ENCODE measurements at regions of chr4 and their contacts with region 1.

Region 1: DNA sequence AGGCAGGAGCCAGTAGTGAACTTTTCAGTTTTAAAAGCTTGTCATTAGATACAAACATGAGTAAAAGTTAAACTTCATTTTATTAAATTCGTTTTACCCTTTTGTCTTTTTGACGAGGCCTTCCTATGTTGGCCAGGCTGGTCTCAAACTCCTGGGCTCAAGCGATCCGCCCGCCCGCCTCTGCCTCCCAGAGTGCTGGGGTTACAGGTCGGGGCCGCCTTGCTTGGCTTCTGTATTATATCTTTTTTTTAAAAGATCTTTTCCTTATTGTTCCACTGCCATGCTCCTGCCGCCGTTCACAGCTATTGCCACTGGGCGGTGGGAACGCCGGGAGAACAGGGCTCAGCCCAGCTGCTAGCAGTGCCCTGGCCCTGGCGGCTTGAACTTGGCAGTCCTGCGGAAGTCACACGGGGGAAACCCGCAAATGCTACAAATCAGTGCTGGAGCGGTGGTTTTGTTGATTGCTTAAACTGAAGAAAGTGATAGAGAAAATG is 977 bp upstream of the NELFA start:
- DNase-seq: no peak
- H3K4me3 ChIP-seq: peak overlapping the region; percentile 83 to 100 (median 85)
- H3K27ac ChIP-seq: peak overlapping the region; percentile 8
- H3K4me1 ChIP-seq: peaks cover 17% of the 10 kb centered on the region
- H3K27me3 ChIP-seq: no peaks in the 10 kb centered on the region
- CTCF ChIP-seq: peak in 2 of 3 experiments; percentile 27 to 37

Region 2: GRCh38 chr4:1628892-1629698 is 380.7 kb before region 1 on chr4:
- dilution Hi-C with region 1: no loop called
- DNase-seq: no peak
- H3K4me3 ChIP-seq: no peak overlapping the region
- H3K27ac ChIP-seq: no peak overlapping the region
- H3K4me1 ChIP-seq: no peaks in the 10 kb centered on the region
- H3K27me3 ChIP-seq: no peaks in the 10 kb centered on the region
- CTCF ChIP-seq: peak; percentile 85 to 99 (median 90)

Region 3: GRCh38 chr4:1958276-1959103 is 51.3 kb before region 1 on chr4:
- dilution Hi-C with region 1: loop called (anchors 10 kb)
- DNase-seq: no peak
- H3K4me3 ChIP-seq: no peak overlapping the region
- H3K27ac ChIP-seq: no peak overlapping the region
- H3K4me1 ChIP-seq: no peaks in the 10 kb centered on the region
- H3K27me3 ChIP-seq: no peaks in the 10 kb centered on the region
- CTCF ChIP-seq: no peak